Dorsolateral prefrontal cortex (tissue), 120 donors: ENCODE measurements at regions of chr3 and their contacts with region 1.

Region 1: DNA sequence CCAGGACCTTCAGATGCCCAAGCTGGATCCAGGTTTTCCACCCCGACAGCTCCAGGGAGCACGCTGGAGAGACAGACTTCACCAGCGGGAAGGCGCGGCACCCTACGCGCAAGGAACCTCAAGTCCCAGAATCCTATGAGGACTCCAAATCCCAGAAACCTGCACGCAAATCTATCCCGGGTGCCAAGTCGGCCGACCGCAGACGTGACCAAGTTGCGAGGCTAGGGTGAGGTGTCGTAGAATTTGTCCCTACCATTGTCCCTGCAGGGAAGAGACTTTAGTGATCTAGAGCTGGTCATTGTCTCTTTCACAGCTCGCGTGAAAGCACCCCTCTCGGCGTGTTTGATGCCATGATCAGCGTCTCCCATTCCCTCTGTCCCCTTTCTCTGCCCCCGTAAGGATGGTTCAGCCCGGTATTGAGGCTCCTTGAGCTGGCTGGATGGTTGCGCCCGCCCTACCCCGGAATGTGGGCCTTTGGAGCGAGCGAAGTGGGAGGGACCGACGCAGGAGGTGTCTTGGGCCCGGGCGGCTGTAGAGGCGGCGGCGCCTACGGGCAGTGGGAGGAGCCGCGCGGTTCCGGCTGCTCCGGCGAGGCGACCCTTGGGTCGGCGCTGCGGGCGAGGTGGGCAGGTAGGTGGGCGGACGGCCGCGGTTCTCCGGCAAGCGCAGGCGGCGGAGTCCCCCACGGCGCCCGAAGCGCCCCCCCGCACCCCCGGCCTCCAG is at the start of gene PRKCI:
- DNase-seq: peak; percentile 87 to 96 (median 94)
- H3K4me3 ChIP-seq: peak within 1 kb of the TSS; percentile 51 to 98 (median 84)
- H3K27ac ChIP-seq: peak within 1 kb of the TSS; percentile 60 to 98 (median 91)
- H3K27me3 ChIP-seq: no peaks in the 10 kb centered on the region
- CTCF ChIP-seq: peak in 13 of 56 donors; percentile 4 to 30 (median 14)
- total RNA-seq, gene PRKCI: 14.6 to 73.6 (median 39.8) TPM

Region 2: DNA sequence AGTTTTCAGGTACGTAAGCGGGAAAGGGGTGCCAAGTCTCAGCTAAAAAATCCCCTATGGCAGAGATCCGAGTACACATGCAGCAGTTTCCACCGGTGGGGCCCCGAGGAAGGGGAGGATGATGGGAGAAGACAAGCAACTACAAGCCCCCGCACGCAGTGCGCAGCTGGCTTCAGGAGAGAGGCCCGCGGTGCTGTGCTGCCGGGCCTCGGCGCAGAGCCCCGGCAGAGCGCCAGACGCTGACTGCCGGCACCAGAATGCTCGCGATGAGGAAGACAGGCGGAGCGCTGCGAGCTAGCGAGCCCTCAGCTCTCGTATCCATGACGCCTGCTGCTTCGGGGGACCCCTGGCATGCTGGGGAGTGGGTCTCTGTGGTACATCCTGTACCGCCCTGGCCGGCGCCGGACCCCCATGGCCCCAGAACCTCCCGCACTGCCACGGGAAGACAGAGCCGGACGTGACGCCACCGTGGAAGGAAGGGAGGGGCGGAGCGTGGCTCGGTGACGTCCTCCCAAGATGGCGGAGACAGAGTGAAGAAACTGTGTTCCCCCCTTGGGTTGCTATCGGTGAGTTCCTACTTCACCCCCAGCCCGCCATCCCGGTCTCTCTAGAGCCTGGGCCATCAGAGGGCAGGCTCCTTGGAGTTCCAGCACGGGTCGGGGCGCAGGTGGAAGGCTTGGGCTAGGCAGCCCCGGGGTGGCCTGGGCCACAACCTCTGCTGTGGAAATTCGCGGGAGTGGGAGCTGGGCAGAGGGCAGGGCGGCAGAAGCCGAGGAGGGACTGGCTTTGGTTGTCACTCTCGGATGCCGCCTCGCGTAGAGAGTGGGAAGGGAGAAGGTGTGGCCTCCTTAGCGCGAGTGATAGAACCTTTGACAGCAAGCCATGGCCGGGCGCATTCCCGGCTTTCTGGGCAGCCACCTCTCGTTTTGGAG is 448.9 kb before region 1 on chr3 and contains the start of gene MYNN:
- intact Hi-C with region 1: loop called in 1 of 2 experiments (anchors 5 kb)
- DNase-seq: peak; percentile 91 to 96 (median 94)
- H3K4me3 ChIP-seq: peak within 1 kb of the TSS; percentile 71 to 100 (median 92)
- H3K27ac ChIP-seq: peak within 1 kb of the TSS; percentile 91 to 100 (median 99)
- H3K27me3 ChIP-seq: no peaks in the 10 kb centered on the region
- CTCF ChIP-seq: peak in 11 of 56 donors; percentile 6 to 27 (median 18)
- total RNA-seq, gene MYNN: 9.5 to 20.4 (median 13.4) TPM